ENCODE measurements at regions of chr1 and their contacts with region 1.

Region 1: DNA sequence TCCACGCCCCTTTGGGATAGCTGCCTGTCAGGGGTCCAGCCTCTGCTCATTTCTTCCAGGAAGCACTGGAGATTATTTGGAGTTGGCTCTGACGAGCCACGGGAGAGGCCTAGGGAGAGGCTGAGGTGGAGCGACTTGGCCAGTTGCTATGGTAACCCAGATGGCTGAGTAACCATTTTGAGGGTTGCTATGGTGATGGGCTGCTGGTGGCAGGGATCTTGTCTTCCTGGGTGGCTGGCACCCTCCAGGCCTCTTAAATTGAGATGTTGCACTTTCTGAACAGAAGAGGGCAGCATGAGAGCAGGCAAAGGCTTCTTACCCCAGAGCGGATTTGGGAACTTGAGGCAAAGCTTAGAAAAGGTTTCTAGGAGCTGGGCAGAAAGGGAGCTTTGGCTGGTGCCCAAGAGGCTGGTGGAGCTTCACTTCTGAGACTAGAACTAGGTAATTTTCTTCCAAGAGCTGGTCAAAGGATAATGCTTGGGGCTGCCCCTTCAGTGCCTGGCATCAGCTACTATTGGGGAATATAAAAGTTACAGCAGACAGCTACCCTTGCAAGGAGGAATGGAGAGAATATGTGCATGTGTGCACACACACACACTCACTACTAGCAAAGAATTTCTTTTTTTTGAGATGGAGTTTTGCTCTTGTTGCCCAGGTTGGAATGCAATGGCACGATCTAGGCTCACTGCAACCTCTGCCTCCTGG is 72.5 kb downstream of the NDUFS5 start:
- DNase-seq: peak; percentile 95
- ATAC-seq: peak; percentile 85
- H3K4me3 ChIP-seq: no peak overlapping the region
- H3K27ac ChIP-seq: no peak overlapping the region
- H3K4me1 ChIP-seq: peaks cover 11 to 23% of the 10 kb centered on the region in 2 experiments; a peak in 3 of 4 replicates
- H3K27me3 ChIP-seq: no peaks in the 10 kb centered on the region
- CTCF ChIP-seq: peak; percentile 66 to 91 (median 85)
- POLR2A ChIP-seq: no peak
- RAD21 ChIP-seq: peak; percentile 98

Region 2: DNA sequence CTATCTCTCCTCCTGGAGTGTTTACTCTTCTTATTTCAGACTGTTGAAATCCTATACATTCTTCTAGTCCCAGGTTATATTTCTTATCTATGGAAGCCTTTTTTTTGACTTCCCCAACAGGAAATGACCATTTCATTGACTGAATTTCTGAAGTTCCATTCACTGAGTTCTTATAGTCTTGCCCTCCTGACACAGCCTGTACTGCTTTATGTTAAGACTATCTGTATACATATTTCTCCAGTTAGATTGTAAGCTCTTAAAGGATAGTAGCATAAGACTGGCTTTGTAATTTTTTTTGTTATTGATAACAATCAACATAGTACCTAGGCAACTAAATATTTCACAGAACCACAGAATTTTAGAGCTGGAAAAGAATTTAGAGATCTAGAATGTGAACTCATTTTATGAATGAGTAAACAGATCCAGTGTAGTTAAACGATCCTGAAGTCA is 90.9 kb after region 1 on chr1:
- CTCF ChIA-PET with region 1: interaction called, 47 read pairs
- POLR2A ChIA-PET with region 1: no interaction called
- RAD21 ChIA-PET with region 1: interaction called, 6 to 9 read pairs
- intact Hi-C with region 1: loop called (anchors 1 kb)
- DNase-seq: no peak
- ATAC-seq: no peak
- H3K4me3 ChIP-seq: no peak overlapping the region
- H3K27ac ChIP-seq: no peak overlapping the region
- H3K4me1 ChIP-seq: peaks cover 65 to 75% of the 10 kb centered on the region in 2 experiments
- H3K27me3 ChIP-seq: no peaks in the 10 kb centered on the region
- CTCF ChIP-seq: no peak
- POLR2A ChIP-seq: no peak
- RAD21 ChIP-seq: no peak

Region 3: DNA sequence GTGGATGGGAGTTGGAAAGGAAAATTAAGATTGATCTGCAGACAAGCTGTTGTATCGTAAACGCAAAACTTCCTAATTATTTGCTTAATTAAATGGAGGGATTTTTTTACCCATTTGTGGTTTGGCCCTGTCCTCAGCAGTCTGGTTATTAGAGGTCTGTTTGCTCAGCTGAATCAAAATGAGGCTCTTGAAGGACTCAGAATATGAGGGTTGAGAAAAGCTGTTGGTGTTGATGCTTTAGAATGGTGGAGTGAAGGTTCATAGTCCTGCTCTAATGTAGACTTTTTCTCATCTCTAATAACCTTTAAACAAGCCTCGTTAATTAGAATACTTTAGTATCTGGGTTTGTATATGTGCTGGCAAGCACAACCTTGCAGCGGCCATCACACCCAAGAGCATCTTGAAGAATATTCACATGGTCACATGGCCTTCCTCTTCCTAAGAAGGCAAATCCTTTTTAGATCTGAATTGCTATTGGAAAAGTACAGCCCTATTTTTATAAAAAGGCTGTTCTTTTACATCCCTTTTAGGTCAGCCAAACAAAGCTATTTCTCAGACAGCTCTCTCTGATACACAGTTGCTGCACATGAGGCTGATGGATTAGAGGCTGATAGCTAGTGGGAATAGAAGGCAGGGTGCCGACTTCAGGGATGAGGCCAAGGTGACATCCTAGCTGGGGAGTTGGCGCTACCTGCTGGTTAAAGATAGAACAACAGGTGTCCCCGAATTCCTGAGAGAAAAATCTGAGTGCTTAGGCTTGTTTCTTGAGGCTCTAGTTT is 159.6 kb after region 1 on chr1:
- CTCF ChIA-PET with region 1: interaction called, 55 read pairs
- POLR2A ChIA-PET with region 1: no interaction called
- RAD21 ChIA-PET with region 1: interaction called, 3 to 10 read pairs
- intact Hi-C with region 1: loop called (anchors 1 kb)
- DNase-seq: peak; percentile 55
- ATAC-seq: peak; percentile 90
- H3K4me3 ChIP-seq: no peak overlapping the region
- H3K27ac ChIP-seq: no peak overlapping the region
- H3K4me1 ChIP-seq: peaks cover 0 to 3% of the 10 kb centered on the region in 2 experiments; a peak in 1 of 4 replicates
- H3K27me3 ChIP-seq: no peaks in the 10 kb centered on the region
- CTCF ChIP-seq: peak; percentile 84 to 92 (median 92)
- POLR2A ChIP-seq: no peak
- RAD21 ChIP-seq: peak; percentile 98

Region 4: DNA sequence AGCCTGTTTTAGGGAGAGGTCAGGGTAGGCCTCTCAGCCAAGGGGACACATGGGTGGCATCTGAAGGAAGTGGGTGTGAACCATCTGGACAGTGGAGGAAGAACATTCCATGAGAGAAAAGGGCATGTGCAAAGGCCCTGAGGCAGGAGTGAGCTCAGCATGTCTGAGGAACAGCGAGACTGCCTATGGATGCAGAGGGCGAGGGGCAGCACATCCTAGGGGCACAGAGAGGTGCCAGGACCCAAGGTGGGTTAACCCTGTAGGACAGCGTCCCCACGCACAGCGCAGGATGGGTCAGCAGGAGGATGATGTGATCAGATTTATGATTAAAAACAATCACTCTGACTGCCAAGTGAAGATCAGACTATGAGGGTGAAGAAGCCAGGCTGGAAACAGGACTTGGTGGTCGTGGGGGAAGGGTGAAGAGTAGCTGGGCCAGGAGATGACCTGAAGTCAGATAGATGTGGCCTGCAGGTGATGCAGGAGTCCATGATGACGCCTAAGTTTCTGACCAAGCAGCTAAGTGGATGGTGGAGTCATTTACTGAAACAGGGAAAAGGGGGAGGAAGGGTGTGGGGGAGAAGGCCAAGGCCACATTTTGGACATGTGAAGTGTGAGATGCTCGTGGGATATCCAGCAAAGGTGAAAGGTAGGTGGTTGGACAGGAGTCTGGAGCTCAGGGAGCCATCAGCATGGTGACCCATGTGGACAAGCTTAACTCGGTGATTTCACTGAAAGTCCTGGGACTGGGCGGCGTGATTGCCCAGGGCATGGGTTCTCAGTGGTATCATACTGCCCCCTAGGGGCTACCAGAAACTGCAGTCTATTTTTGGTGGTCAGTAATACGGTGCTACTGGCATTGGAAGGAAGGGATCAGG is 440.1 kb after region 1 on chr1:
- CTCF ChIA-PET with region 1: interaction called, 46 read pairs
- POLR2A ChIA-PET with region 1: no interaction called
- RAD21 ChIA-PET with region 1: interaction called, 4 read pairs
- intact Hi-C with region 1: loop called (anchors 1 kb)
- DNase-seq: peak; percentile 49
- ATAC-seq: peak; percentile 99
- H3K4me3 ChIP-seq: no peak overlapping the region
- H3K27ac ChIP-seq: no peak overlapping the region
- H3K4me1 ChIP-seq: peaks cover 0 to 3% of the 10 kb centered on the region in 2 experiments; a peak in 2 of 4 replicates
- H3K27me3 ChIP-seq: no peaks in the 10 kb centered on the region
- CTCF ChIP-seq: peak; percentile 83 to 94 (median 91)
- POLR2A ChIP-seq: no peak
- RAD21 ChIP-seq: peak; percentile 98

Region 5: DNA sequence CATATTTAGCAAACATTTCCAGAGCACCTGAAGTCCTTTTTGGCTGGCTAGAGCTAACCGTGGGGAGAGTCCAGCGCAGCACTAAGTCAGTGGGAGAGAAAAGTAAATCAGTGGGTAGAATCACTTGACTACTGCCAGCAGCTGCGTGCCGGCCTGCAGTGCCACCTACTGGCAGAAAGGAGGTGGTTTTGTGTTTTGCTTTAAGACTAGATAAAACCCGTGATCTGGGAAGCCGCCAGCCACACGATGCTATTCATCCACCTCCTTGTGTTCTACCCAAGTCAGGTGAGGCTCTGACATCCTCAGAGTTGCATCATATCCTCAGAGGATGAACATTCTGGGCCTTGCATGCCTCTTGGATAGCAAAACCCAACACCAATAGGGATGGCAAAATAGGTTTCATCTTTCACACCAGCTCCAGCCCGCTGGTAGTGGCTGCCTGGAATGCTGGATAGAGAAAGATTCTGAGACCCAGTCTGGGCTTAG is 554.9 kb after region 1 on chr1:
- CTCF ChIA-PET with region 1: interaction called, 12 read pairs
- POLR2A ChIA-PET with region 1: no interaction called
- RAD21 ChIA-PET with region 1: no interaction called
- intact Hi-C with region 1: loop called (anchors 2 kb)
- DNase-seq: peak; percentile 71
- ATAC-seq: peak; percentile 69
- H3K4me3 ChIP-seq: no peak overlapping the region
- H3K27ac ChIP-seq: no peak overlapping the region
- H3K4me1 ChIP-seq: peaks cover 0 to 19% of the 10 kb centered on the region in 2 experiments; a peak in 2 of 4 replicates
- H3K27me3 ChIP-seq: no peaks in the 10 kb centered on the region
- CTCF ChIP-seq: peak; percentile 84 to 91 (median 87)
- POLR2A ChIP-seq: no peak
- RAD21 ChIP-seq: peak; percentile 91